GM12878 (cell line): ENCODE measurements at regions of chr1 and their contacts with region 1.

Region 1: GRCh38 chr1:18883636-18884418 is 18.5 kb downstream of the ALDH4A1 start:
- DNase-seq: no peak
- ATAC-seq: peak; percentile 96
- H3K4me3 ChIP-seq: no peak overlapping the region
- H3K27ac ChIP-seq: no peak overlapping the region
- H3K4me1 ChIP-seq: no peaks in the 10 kb centered on the region
- H3K27me3 ChIP-seq: no peaks in the 10 kb centered on the region
- CTCF ChIP-seq: peak; percentile 84 to 94 (median 94)
- EP300 ChIP-seq: no peak
- POLR2A ChIP-seq: no peak
- RAD21 ChIP-seq: peak; percentile 82

Region 2: DNA sequence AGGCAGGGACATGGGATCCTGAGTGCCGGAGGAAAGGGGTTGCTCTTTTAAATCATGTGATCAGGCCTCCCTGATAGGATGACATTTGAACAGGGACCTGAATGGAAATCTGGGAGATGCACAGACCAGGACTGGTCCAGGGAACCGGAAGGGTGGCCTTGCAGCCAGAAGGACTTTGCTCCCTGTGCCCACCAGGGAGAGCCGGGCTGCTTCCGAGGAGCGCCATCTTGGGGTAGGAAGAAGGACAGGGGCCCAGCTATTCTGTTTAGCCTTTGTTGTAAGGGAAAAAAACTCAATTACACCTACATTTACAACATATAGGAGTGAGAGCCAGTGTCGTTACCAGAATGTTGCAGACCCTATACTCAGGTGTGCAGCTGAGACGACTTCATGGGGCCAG is 397.6 kb before region 1 on chr1:
- CTCF ChIA-PET with region 1: no interaction called
- POLR2A ChIA-PET with region 1: no interaction called
- RAD21 ChIA-PET with region 1: no interaction called
- SMC1A ChIA-PET with region 1: no interaction called
- in situ Hi-C with region 1: no loop called
- intact Hi-C with region 1: no loop called
- DNase-seq: no peak
- ATAC-seq: no peak
- H3K4me3 ChIP-seq: no peak overlapping the region
- H3K27ac ChIP-seq: no peak overlapping the region
- H3K4me1 ChIP-seq: no peaks in the 10 kb centered on the region; the same call in 1 of the 2 replicates
- H3K27me3 ChIP-seq: no peaks in the 10 kb centered on the region
- CTCF ChIP-seq: no peak
- EP300 ChIP-seq: no peak
- POLR2A ChIP-seq: no peak
- RAD21 ChIP-seq: no peak

Region 3: DNA sequence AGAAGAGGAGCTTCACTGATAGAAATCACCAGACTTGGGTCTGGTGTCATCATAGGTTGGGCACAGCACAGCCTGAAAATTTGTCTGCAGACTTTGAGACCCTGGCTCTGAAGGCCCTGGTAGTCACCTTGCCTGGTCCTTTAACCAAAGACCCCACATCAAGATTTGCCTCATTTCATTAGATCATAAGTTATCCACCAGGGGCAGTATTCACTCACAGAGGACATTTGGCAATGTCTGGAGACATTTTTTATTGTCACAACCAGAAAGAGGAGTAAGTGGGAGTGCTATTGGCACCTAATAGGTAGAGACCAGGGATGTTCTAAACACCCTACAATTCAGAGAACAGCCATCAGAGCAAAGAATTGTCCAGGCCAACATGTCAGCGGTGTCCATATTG is 275.3 kb before region 1 on chr1:
- CTCF ChIA-PET with region 1: no interaction called
- POLR2A ChIA-PET with region 1: no interaction called
- RAD21 ChIA-PET with region 1: no interaction called
- SMC1A ChIA-PET with region 1: no interaction called
- in situ Hi-C with region 1: no loop called
- intact Hi-C with region 1: no loop called
- DNase-seq: no peak
- ATAC-seq: no peak
- H3K4me3 ChIP-seq: no peak overlapping the region
- H3K27ac ChIP-seq: no peak overlapping the region
- H3K4me1 ChIP-seq: no peaks in the 10 kb centered on the region
- H3K27me3 ChIP-seq: no peaks in the 10 kb centered on the region; a peak in 1 of 4 replicates
- CTCF ChIP-seq: 0 out of 6 replicates have a peak, but pooled peaks of 1 of the 3 experiments have one; percentile 9
- EP300 ChIP-seq: no peak
- POLR2A ChIP-seq: no peak
- RAD21 ChIP-seq: no peak

Region 4: DNA sequence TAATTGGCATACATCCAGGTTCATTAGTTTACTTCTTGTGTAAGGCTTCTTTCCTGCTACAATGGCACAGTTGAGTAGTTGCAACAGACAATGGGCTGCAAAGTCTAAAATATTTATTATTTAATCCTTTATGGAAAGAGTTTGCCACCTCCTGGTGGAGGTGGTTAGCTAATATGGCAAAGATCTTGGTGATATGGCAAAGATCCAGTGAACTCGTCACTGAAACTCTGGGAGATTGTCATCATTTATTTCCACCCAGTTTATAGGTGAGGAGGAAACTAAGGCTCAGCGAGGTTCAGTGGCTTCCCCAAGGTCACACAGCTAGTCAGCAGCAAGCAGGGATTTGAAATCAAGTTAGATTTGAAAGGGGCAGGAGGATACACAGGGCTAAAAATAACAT is 88.7 kb after region 1 on chr1:
- CTCF ChIA-PET with region 1: interaction called, 10 read pairs
- POLR2A ChIA-PET with region 1: no interaction called
- RAD21 ChIA-PET with region 1: interaction called, 4 read pairs
- SMC1A ChIA-PET with region 1: interaction called, 4 read pairs
- in situ Hi-C with region 1: no loop called
- intact Hi-C with region 1: no loop called
- DNase-seq: no peak
- ATAC-seq: no peak
- H3K4me3 ChIP-seq: no peak overlapping the region
- H3K27ac ChIP-seq: no peak overlapping the region
- H3K4me1 ChIP-seq: no peaks in the 10 kb centered on the region
- H3K27me3 ChIP-seq: peaks cover 0 to 3% of the 10 kb centered on the region in 2 experiments; a peak in 1 of 4 replicates
- CTCF ChIP-seq: peak; percentile 20 to 39 (median 20); a peak in 4 of 6 replicates
- EP300 ChIP-seq: no peak
- POLR2A ChIP-seq: no peak
- RAD21 ChIP-seq: peak; percentile 55

Region 5: GRCh38 chr1:19087737-19088594 is 204.1 kb after region 1 on chr1:
- CTCF ChIA-PET with region 1: interaction called, 13 read pairs
- POLR2A ChIA-PET with region 1: no interaction called
- RAD21 ChIA-PET with region 1: interaction called, 3 read pairs
- SMC1A ChIA-PET with region 1: interaction called, 6 read pairs
- in situ Hi-C with region 1: no loop called
- intact Hi-C with region 1: no loop called
- DNase-seq: peak; percentile 19
- ATAC-seq: peak; percentile 90
- H3K4me3 ChIP-seq: 0 out of 2 replicates have a peak overlapping the region, but pooled peaks have one; percentile 6
- H3K27ac ChIP-seq: peak overlapping the region; percentile 75
- H3K4me1 ChIP-seq: peaks cover 26% of the 10 kb centered on the region
- H3K27me3 ChIP-seq: no peaks in the 10 kb centered on the region
- CTCF ChIP-seq: no peak
- EP300 ChIP-seq: no peak
- POLR2A ChIP-seq: peak; percentile 60
- RAD21 ChIP-seq: no peak

Region 6: DNA sequence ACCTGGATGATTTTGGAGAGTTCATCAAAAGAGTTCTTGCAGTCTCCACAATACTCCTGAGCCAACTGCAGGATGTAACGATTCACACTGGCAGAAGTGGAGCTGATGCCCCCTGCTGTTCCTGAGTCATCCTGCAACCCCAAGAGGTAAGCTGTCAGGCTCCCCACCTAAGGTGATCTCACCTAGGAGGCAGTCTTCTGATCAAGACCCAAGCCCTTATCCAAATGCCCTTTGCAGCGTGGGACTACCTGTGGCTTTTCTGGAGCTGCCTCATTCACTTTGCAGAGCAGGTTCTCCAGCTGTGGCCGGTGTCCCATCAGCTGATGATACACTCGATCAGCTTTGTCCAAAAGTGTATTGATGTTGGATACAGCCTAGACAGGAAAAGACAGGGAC is 229.9 kb after region 1 on chr1:
- CTCF ChIA-PET with region 1: interaction called, 16 read pairs
- POLR2A ChIA-PET with region 1: no interaction called
- RAD21 ChIA-PET with region 1: interaction called, 4 read pairs
- SMC1A ChIA-PET with region 1: interaction called, 5 read pairs
- in situ Hi-C with region 1: no loop called
- intact Hi-C with region 1: no loop called
- DNase-seq: no peak
- ATAC-seq: peak; percentile 85
- H3K4me3 ChIP-seq: no peak overlapping the region
- H3K27ac ChIP-seq: no peak overlapping the region
- H3K4me1 ChIP-seq: no peaks in the 10 kb centered on the region
- H3K27me3 ChIP-seq: no peaks in the 10 kb centered on the region
- CTCF ChIP-seq: peak; percentile 52 to 54 (median 53); a peak in 5 of 6 replicates
- EP300 ChIP-seq: no peak
- POLR2A ChIP-seq: no peak
- RAD21 ChIP-seq: peak; percentile 39; the same call in 1 of the 2 replicates

Region 7: GRCh38 chr1:19240673-19241538 is 357.1 kb after region 1 on chr1:
- CTCF ChIA-PET with region 1: interaction called, 10 read pairs
- POLR2A ChIA-PET with region 1: no interaction called
- RAD21 ChIA-PET with region 1: no interaction called
- SMC1A ChIA-PET with region 1: no interaction called
- in situ Hi-C with region 1: no loop called
- intact Hi-C with region 1: loop called (anchors 2 kb)
- DNase-seq: no peak
- ATAC-seq: peak; percentile 97
- H3K4me3 ChIP-seq: no peak overlapping the region
- H3K27ac ChIP-seq: no peak overlapping the region
- H3K4me1 ChIP-seq: no peaks in the 10 kb centered on the region
- H3K27me3 ChIP-seq: no peaks in the 10 kb centered on the region
- CTCF ChIP-seq: peak; percentile 89 to 96 (median 94)
- EP300 ChIP-seq: no peak
- POLR2A ChIP-seq: no peak
- RAD21 ChIP-seq: peak; percentile 73